ENCODE measurements at regions of chr15 and their contacts with region 1.

Region 1: GRCh38 chr15:68578174-68578979 is 416 bp upstream of the CORO2B start:
- DNase-seq: peak; percentile 86
- ATAC-seq: peak; percentile 76

Region 2: DNA sequence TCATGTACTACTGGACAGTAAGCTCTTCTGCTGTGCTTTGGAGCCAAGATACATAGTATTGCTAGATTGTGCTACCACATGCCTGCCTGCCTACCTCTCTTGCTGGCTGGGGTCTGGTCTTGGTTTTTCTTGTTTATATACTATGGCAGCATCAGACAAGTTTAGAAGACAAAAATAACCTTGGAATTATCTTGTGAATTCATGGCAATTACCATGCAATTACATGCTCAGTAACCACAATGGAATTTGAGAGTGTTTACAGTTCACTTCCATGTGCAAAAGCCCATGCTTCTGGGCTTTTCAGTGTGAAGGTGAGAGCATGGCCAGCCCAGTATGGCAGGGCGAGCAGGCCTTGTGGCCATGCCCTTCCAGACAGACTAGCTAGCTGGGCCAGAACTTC is 1105.4 kb before region 1 on chr15:
- intact Hi-C with region 1: loop called (anchors 5 kb)
- DNase-seq: no peak
- ATAC-seq: no peak

Region 3: DNA sequence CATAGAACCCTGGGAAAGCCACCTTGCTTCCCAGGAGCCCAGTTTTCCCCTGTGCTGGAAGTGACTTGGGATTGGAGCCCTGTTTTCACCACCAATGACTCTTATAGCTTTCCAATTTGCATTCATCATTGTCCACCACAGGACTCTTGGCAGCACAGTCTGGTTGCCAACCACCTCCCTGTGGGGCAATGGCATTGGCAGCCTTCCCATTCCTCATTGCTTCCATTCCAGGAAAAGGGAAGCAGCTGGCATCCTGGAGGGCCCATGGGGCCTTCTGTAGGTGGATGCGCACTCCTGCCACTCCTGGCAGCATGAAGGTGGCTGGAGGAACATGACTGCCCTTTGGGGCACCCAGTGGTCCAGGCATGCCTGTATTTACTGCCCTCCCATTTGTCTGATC is 243.1 kb before region 1 on chr15:
- intact Hi-C with region 1: no loop called
- DNase-seq: no peak
- ATAC-seq: peak; percentile 11

Measured in sciatic nerve (tissue), 2 donors.